ENCODE measurements at regions of chr4 and their contacts with region 1.

Region 1: DNA sequence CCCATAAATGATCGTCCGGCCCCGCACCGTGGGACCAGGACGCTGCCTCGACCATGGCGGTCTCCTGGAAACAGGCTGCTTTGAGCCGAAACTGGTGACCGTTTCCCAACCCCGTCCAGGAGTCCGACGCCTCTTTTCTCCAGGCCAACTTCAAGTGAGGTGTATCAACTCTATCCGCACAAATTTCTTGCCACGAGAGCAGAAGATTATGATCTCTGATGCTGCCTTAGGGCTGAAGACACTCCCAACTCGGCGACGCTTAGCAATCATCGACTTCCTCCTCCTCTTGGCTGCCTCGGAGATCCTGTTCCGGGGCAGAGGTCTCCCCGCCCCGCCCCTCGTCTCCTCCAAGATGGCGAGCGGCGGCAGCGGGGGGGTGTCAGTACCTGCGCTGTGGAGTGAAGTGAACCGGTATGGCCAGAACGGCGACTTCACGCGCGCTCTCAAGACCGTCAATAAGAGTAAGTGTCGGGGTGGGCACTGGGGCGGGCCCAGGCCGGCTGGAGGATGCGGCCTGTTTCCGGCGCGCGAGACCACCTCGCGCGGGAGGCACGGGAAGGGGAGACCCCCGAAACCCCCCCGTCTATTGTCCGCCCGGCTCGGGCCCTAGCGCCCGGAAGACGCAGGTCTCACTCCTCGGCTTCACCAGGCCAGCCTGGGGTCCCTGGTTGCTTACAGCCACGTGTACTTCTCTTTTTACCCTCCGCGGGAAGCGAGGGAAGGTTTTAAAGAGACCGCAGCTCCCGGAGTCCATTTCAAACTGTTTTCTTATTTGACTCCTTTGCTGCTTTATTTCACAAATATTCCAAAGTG is at the start of gene SRP72:
- DNase-seq: peak; percentile 91
- H3K4me3 Mint-ChIP-seq: peak within 1 kb of the TSS; percentile 94
- H3K27ac Mint-ChIP-seq: peak within 1 kb of the TSS; percentile 95
- H3K4me1 Mint-ChIP-seq: peaks cover 52% of the 10 kb centered on the region
- H3K27me3 Mint-ChIP-seq: no peaks in the 10 kb centered on the region
- total RNA-seq, gene SRP72: 140 to 142 TPM

Region 2: DNA sequence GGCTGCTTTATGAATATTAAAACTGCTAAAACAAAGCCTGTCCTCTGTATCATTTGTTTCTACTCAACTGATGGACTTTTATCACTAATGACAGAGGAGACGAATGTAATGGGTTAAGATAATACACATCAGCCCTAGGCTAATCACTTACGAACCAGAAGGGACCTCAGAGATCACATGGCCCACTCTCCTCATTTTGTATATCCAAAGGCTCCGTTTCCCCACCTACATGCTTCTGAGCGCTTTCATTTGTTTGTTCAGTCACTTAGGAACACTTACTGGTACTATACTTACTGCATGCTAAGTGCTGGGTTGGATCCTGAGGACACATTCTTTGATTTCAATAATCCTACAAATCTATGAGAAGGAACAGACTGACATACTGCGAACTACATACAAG is 349.4 kb before region 1 on chr4:
- CTCF ChIA-PET with region 1: no interaction called
- POLR2A ChIA-PET with region 1: no interaction called
- DNase-seq: no peak
- H3K4me3 Mint-ChIP-seq: no peak overlapping the region
- H3K27ac Mint-ChIP-seq: no peak overlapping the region
- H3K4me1 Mint-ChIP-seq: no peaks in the 10 kb centered on the region
- H3K27me3 Mint-ChIP-seq: peaks cover 12% of the 10 kb centered on the region

Region 3: GRCh38 chr4:56445699-56446098 is 21.8 kb before region 1 on chr4:
- CTCF ChIA-PET with region 1: interaction called, 3 read pairs
- POLR2A ChIA-PET with region 1: interaction called, 12 read pairs
- DNase-seq: no peak
- H3K4me3 Mint-ChIP-seq: no peak overlapping the region
- H3K27ac Mint-ChIP-seq: no peak overlapping the region
- H3K4me1 Mint-ChIP-seq: peaks cover 43% of the 10 kb centered on the region
- H3K27me3 Mint-ChIP-seq: no peaks in the 10 kb centered on the region